ENCODE measurements at regions of chr20 and their contacts with region 1.

Region 1: DNA sequence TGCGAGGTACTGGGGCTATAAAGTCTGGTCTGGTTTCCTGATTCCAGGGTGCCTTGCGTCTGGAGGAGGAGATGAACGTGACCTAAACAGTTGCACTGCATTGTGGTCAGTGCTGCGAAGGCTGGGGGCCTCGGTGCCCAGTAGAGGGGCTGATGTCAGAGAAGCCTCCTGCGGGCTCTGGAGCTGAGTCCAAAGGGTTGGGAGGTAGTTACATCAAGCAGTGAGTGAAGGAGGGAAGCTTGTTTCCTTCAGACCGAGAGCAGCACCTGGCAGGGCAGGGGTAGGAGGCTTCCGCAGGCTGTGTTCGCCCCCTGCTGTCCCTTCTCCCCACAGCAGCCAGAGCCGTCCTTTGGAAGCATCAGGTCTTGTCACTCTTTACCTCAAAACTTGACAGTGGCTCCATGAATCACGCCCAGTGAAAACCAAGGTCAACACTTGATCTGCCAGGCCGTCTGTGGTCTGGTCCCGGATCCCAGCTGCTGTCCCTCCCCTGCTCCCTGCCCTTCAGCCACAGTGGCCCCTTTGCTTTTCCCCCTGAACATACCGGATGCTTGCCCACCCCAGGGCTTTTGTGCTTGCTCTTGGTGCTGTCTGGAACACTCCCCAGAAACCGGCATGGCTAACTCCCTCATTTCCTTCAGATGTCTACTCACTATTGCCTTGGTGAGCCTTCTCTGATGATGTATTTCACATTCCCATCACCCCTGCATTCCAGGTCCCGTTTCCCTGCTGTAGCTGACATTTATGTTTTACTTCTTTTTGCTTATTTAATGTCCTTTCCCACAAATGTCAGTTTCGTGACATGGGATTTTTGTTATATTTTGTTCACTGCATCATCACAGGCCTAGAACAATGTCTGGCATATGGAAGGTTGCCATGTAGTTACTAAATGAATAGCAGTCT is 7.0 kb downstream of the DYNLRB1 start:
- DNase-seq: peak; percentile 56 to 82
- ATAC-seq: peak; percentile 63 to 77
- H3K4me3 ChIP-seq: no peak overlapping the region
- H3K27ac ChIP-seq: peak overlapping the region; percentile 78 to 87 (median 79)
- H3K4me1 ChIP-seq: peaks cover 65 to 82% of the 10 kb centered on the region in 2 donors
- H3K27me3 ChIP-seq: no peaks in the 10 kb centered on the region
- CTCF ChIP-seq: peak; percentile 69 to 81 (median 70)
- POLR2A ChIP-seq: no peak

Region 2: GRCh38 chr20:34190679-34191090 is 332.5 kb before region 1 on chr20:
- in situ Hi-C with region 1: no loop called
- intact Hi-C with region 1: loop called (anchors 5 kb)
- DNase-seq: peak; percentile 36 to 53
- ATAC-seq: peak; percentile 85 to 95
- H3K4me3 ChIP-seq: no peak overlapping the region
- H3K27ac ChIP-seq: no peak overlapping the region
- H3K4me1 ChIP-seq: no peaks in the 10 kb centered on the region
- H3K27me3 ChIP-seq: no peaks in the 10 kb centered on the region
- CTCF ChIP-seq: peak; percentile 36 to 66 (median 60)
- POLR2A ChIP-seq: no peak

Region 3: DNA sequence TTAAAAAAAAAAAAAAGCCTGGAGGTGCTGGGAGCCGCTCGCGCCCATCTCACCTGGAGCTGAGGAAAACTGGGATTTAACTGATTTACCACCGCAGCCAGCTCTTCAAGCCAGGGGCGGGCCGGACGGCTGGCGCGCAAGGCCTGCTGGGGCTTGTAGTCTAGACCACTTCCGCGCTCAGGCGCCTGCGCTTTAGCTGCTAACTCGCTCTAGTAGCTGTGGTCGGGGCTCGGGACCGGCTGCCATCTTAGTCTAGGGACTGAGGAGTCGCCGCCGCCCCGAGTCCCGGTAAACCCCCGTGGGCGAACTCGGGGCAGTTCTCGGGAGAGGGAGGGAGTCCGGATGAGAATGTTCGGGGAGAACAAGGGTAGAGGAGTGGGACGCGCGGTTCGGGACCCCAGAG is 160.2 kb before region 1 on chr20 and contains the start of gene ITCH:
- in situ Hi-C with region 1: no loop called
- intact Hi-C with region 1: loop called (anchors 5 kb)
- DNase-seq: peak; percentile 95
- ATAC-seq: peak; percentile 99
- H3K4me3 ChIP-seq: peak within 1 kb of the TSS; percentile 86 to 91 (median 88)
- H3K27ac ChIP-seq: peak within 1 kb of the TSS; percentile 92 to 96 (median 94)
- H3K4me1 ChIP-seq: peaks cover 34 to 35% of the 10 kb centered on the region in 2 donors
- H3K27me3 ChIP-seq: no peaks in the 10 kb centered on the region
- CTCF ChIP-seq: no peak
- POLR2A ChIP-seq: peak; percentile 93
- total RNA-seq, gene ITCH: 32.9 to 55.2 (median 52.0) TPM

Region 4: DNA sequence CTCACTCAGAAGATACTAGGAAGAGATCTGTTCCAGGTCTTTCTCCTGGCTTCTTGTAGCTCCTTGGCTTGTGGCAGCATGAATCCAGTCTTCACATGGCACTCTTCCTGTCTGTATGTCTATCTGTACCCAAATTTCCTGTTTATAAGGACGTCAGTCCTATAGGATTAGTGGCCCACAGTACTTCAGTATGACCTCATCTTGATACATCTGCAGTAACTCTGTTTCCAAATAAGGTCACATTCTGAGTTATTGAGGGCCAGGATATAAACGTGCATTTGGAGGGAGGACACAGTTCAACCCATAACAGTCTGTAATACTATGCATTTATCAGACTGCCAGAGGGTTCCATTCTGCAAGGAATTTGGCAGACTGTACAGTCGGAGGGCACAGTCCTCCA is 64.6 kb before region 1 on chr20:
- in situ Hi-C with region 1: no loop called
- intact Hi-C with region 1: no loop called
- DNase-seq: no peak
- ATAC-seq: no peak
- H3K4me3 ChIP-seq: no peak overlapping the region
- H3K27ac ChIP-seq: no peak overlapping the region
- H3K4me1 ChIP-seq: no peaks in the 10 kb centered on the region
- H3K27me3 ChIP-seq: no peaks in the 10 kb centered on the region
- CTCF ChIP-seq: no peak
- POLR2A ChIP-seq: no peak

Measured in gastrocnemius medialis (tissue), 4 donors.